Left lung (tissue), 14 donors: ENCODE measurements at regions of chr19 and their contacts with region 1.

Region 1: GRCh38 chr19:8252922-8253589 is 43.9 kb downstream of the CERS4 start:
- DNase-seq: peak; percentile 77 to 96 (median 84)
- ATAC-seq: peak; percentile 78
- H3K4me3 ChIP-seq: no peak overlapping the region
- H3K27ac ChIP-seq: no peak overlapping the region
- H3K4me1 ChIP-seq: peaks cover 0 to 4% of the 10 kb centered on the region in 2 donors
- H3K27me3 ChIP-seq: no peaks in the 10 kb centered on the region
- CTCF ChIP-seq: peak; percentile 95 to 96

Region 2: GRCh38 chr19:7943444-7944176 is 309.4 kb before region 1 on chr19 and contains the start of gene TIMM44:
- intact Hi-C with region 1: loop called in 1 of 2 experiments (anchors 10 kb)
- DNase-seq: peak; percentile 97 to 99 (median 99)
- ATAC-seq: peak; percentile 98
- H3K4me3 ChIP-seq: peak within 1 kb of the TSS; percentile 74 to 91
- H3K27ac ChIP-seq: peak within 1 kb of the TSS; percentile 86 to 92
- H3K4me1 ChIP-seq: peaks cover 7 to 42% of the 10 kb centered on the region in 2 donors
- H3K27me3 ChIP-seq: no peaks in the 10 kb centered on the region
- CTCF ChIP-seq: no peak
- polyA plus RNA-seq, gene TIMM44: 36.7 to 56.5 (median 42.9) TPM

Region 3: GRCh38 chr19:7968796-7969554 is 284.1 kb before region 1 on chr19:
- intact Hi-C with region 1: loop called in 1 of 2 experiments (anchors 10 kb)
- DNase-seq: peak in 1 of 4 donors; percentile 56
- ATAC-seq: no peak
- H3K4me3 ChIP-seq: no peak overlapping the region
- H3K27ac ChIP-seq: no peak overlapping the region
- H3K4me1 ChIP-seq: no peaks in the 10 kb centered on the region
- H3K27me3 ChIP-seq: no peaks in the 10 kb centered on the region
- CTCF ChIP-seq: no peak

Region 4: GRCh38 chr19:8113016-8113416 is 140.0 kb before region 1 on chr19:
- intact Hi-C with region 1: no loop called
- DNase-seq: peak; percentile 1 to 71 (median 28)
- ATAC-seq: peak; percentile 93
- H3K4me3 ChIP-seq: no peak overlapping the region
- H3K27ac ChIP-seq: peak overlapping the region; percentile 25 to 42
- H3K4me1 ChIP-seq: no peaks in the 10 kb centered on the region
- H3K27me3 ChIP-seq: peaks cover 0 to 16% of the 10 kb centered on the region in 2 donors
- CTCF ChIP-seq: no peak

Region 5: GRCh38 chr19:8158411-8159074 is 94.5 kb before region 1 on chr19:
- intact Hi-C with region 1: loop called (anchors 10 kb)
- DNase-seq: peak in 2 of 4 donors; percentile 61 to 79
- ATAC-seq: peak; percentile 84
- H3K4me3 ChIP-seq: no peak overlapping the region
- H3K27ac ChIP-seq: no peak overlapping the region
- H3K4me1 ChIP-seq: peaks cover 3 to 9% of the 10 kb centered on the region in 2 donors
- H3K27me3 ChIP-seq: no peaks in the 10 kb centered on the region
- CTCF ChIP-seq: peak; percentile 52 to 88